ENCODE measurements at regions of chr12 and their contacts with region 1.

Region 1: GRCh38 chr12:4276524-4277204 is 3.1 kb downstream of the CCND2 start:
- H3K4me3 Mint-ChIP-seq: peak overlapping the region; percentile 40
- H3K27ac Mint-ChIP-seq: no peak overlapping the region
- H3K4me1 Mint-ChIP-seq: peaks cover 73% of the 10 kb centered on the region
- H3K27me3 Mint-ChIP-seq: peaks cover 58% of the 10 kb centered on the region

Region 2: GRCh38 chr12:3872800-3873636 is 403.6 kb before region 1 on chr12 and contains the start of gene PARP11:
- intact Hi-C with region 1: loop called (anchors 5 kb)
- H3K4me3 Mint-ChIP-seq: peak within 1 kb of the TSS; percentile 90
- H3K27ac Mint-ChIP-seq: peak within 1 kb of the TSS; percentile 96
- H3K4me1 Mint-ChIP-seq: peaks cover 42% of the 10 kb centered on the region
- H3K27me3 Mint-ChIP-seq: peaks cover 1% of the 10 kb centered on the region

Region 3: GRCh38 chr12:3885277-3886094 is 391.2 kb before region 1 on chr12:
- intact Hi-C with region 1: loop called (anchors 2 kb)
- H3K4me3 Mint-ChIP-seq: no peak overlapping the region
- H3K27ac Mint-ChIP-seq: no peak overlapping the region
- H3K4me1 Mint-ChIP-seq: no peaks in the 10 kb centered on the region
- H3K27me3 Mint-ChIP-seq: peaks cover 13% of the 10 kb centered on the region

Region 4: GRCh38 chr12:3996348-3996747 is 280.3 kb before region 1 on chr12:
- intact Hi-C with region 1: loop called (anchors 1 kb)
- H3K4me3 Mint-ChIP-seq: no peak overlapping the region
- H3K27ac Mint-ChIP-seq: no peak overlapping the region
- H3K4me1 Mint-ChIP-seq: peaks cover 15% of the 10 kb centered on the region
- H3K27me3 Mint-ChIP-seq: peaks cover 46% of the 10 kb centered on the region

Region 5: GRCh38 chr12:4037747-4038312 is 238.8 kb before region 1 on chr12:
- intact Hi-C with region 1: loop called (anchors 1 kb)
- H3K4me3 Mint-ChIP-seq: no peak overlapping the region
- H3K27ac Mint-ChIP-seq: no peak overlapping the region
- H3K4me1 Mint-ChIP-seq: peaks cover 37% of the 10 kb centered on the region
- H3K27me3 Mint-ChIP-seq: peaks cover 28% of the 10 kb centered on the region

Region 6: GRCh38 chr12:4107436-4107878 is 169.2 kb before region 1 on chr12:
- intact Hi-C with region 1: loop called (anchors 1 kb)
- H3K4me3 Mint-ChIP-seq: peak overlapping the region; percentile 13
- H3K27ac Mint-ChIP-seq: no peak overlapping the region
- H3K4me1 Mint-ChIP-seq: peaks cover 51% of the 10 kb centered on the region
- H3K27me3 Mint-ChIP-seq: peaks cover 75% of the 10 kb centered on the region

Region 7: DNA sequence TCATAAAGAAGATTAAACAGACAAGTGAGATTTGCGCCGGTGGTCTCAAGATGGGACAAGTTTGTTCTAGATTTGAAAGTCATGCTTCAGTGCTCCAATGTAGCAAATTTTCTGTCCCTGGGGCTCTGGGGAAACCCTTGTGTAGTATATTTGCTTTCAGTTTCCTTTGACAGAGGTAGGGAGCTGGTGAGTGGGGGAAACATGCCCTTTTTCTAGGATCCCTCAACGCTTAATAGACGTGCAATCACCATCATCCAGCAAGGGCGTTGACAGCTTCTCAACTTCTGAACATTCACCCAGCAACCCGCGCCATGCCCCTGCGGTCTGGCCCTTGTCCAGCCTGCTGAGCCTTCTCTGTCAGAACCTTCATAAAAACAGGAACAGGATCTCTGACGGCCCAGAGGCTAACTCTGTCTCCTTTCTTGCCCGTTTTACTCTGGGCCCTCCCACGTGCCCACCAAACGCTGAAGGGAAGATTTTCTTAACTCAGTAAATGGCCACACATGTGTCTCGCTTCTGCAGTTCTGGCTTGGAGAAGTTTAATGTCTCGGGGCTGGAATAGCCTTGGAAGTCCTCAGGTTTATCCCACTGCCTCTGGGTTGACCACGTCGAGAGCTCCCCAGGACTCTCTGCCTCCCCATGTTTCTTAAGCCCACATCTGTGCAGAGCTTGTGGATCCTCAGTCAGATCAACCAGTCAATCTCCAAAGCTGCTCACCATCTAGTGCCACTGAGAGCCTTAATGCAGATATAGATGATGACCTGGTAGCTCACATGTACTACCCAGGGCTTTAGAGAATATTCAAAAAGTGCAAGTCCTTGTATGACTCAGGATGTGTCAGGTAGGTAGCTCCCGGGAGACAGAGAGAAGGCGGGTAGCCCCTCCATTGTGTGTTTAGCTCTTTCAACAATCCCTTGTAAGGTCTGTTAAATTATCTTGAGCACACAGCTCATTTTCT is 61.2 kb before region 1 on chr12:
- intact Hi-C with region 1: loop called (anchors 1 kb)
- H3K4me3 Mint-ChIP-seq: peak overlapping the region; percentile 14
- H3K27ac Mint-ChIP-seq: peak overlapping the region; percentile 76
- H3K4me1 Mint-ChIP-seq: peaks cover 56% of the 10 kb centered on the region
- H3K27me3 Mint-ChIP-seq: peaks cover 86% of the 10 kb centered on the region